ENCODE measurements at regions of chr15 and their contacts with region 1.

Region 1: DNA sequence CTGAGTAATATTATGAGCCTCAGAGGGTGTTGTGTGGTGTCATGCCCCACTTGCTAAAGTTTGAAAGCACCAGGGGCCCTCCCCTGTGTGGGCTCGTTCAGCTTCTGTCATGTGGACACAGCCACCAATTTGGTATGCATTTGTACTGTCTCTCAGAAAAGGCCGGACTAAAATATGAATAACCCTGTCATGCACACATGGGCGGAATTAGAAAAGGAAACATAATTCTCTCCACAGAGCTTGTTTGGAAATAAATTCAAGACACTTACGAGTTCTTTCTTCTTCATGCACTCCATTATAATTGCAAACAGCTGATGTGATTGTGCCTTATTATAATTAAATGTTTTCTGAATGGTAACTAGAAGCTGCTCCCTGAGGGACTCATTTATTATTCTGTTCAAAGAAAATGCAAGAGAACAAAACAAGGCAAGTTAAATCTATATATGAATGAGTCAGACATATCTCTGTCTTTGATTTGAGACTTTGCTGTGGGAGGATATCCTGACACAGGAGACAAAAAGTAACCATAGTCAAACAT is 39.1 kb downstream of the TRPM1 start:
- DNase-seq: no peak
- ATAC-seq: peak in 2 of 4 donors; percentile 21 to 66
- H3K4me3 ChIP-seq: no peak overlapping the region
- H3K27ac ChIP-seq: peak overlapping the region; percentile 9 to 78 (median 60)
- H3K4me1 ChIP-seq: peaks cover 0 to 8% (median 1%) of the 10 kb centered on the region in 12 donors
- H3K27me3 ChIP-seq: no peaks in the 10 kb centered on the region
- CTCF ChIP-seq: no peak
- POLR2A ChIP-seq: no peak

Region 2: DNA sequence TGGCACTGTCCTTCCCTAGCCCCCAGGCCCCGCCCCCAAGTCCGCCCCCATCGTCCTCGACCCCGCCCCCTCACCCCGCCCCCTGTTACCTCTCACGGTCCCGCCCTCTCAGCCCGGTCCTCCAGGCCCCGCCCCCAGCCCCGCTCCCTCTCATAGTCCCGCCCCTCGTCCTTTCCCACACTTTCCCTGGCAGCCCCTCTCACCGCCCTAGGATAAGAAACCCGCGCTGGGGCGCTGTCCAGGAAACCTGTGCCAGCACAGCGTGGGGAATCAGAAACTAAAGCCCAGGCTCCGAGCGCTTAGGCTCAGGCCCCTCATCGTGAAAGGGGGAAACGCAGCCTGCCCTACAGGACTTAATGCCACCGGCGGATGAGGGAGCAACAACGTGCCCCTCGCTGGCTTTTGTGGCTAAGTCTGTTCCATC is 18.2 kb after region 1 on chr15:
- intact Hi-C with region 1: loop called in 1 of 10 experiments (anchors 2 kb)
- DNase-seq: peak; percentile 27 to 84 (median 39)
- ATAC-seq: peak in 3 of 4 donors; percentile 67 to 81 (median 75)
- H3K4me3 ChIP-seq: peak overlapping the region in 8 of 12 donors; percentile 23 to 48 (median 33)
- H3K27ac ChIP-seq: no peak overlapping the region
- H3K4me1 ChIP-seq: peaks cover 0 to 16% (median 0%) of the 10 kb centered on the region in 12 donors
- H3K27me3 ChIP-seq: peaks cover 0 to 7% (median 0%) of the 10 kb centered on the region in 9 donors
- CTCF ChIP-seq: no peak
- POLR2A ChIP-seq: no peak

Region 3: DNA sequence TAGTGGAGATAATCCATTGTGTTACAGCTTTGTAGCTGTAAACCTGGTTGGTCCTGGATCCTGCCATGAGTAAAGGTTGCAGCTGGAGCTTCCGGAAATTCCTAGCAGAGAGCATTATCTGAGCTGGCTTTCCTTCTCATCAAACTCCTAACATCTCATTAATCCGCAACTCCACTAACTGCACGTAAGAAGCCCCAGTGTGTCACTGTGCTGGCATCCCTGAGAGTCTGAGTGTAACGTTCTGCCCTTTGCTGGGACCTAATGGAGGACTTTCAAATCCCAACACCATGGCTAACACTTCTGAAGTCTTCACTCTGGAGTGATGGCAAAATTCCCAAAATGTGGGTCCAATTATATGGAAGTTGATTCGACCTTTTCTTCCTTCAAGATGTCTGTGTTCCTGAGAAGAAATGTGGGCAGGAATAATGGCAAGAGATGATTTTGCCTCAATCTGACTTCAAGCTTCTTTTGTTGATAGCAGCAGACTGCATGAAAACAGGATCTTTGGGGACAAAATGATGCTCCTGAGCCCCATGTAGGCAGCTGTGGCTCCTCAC is 48.8 kb after region 1 on chr15:
- intact Hi-C with region 1: loop called in 1 of 10 experiments (anchors 5 kb)
- DNase-seq: no peak
- ATAC-seq: no peak
- H3K4me3 ChIP-seq: no peak overlapping the region
- H3K27ac ChIP-seq: no peak overlapping the region
- H3K4me1 ChIP-seq: no peaks in the 10 kb centered on the region
- H3K27me3 ChIP-seq: no peaks in the 10 kb centered on the region
- CTCF ChIP-seq: no peak
- POLR2A ChIP-seq: no peak